Activated B cell treated with CpG ODN at 0.5 μM for 24 hours (primary cell): ENCODE measurements at regions of chr6 and their contacts with region 1.

Region 1: GRCh38 chr6:72669324-72669723 is 47.5 kb downstream of the KCNQ5 start:
- DNase-seq: no peak
- ATAC-seq: no peak
- H3K4me3 Mint-ChIP-seq: no peak overlapping the region
- H3K27ac Mint-ChIP-seq: no peak overlapping the region
- H3K4me1 Mint-ChIP-seq: peaks cover 7% of the 10 kb centered on the region
- H3K27me3 Mint-ChIP-seq: no peaks in the 10 kb centered on the region
- CTCF ChIP-seq: no peak

Region 2: DNA sequence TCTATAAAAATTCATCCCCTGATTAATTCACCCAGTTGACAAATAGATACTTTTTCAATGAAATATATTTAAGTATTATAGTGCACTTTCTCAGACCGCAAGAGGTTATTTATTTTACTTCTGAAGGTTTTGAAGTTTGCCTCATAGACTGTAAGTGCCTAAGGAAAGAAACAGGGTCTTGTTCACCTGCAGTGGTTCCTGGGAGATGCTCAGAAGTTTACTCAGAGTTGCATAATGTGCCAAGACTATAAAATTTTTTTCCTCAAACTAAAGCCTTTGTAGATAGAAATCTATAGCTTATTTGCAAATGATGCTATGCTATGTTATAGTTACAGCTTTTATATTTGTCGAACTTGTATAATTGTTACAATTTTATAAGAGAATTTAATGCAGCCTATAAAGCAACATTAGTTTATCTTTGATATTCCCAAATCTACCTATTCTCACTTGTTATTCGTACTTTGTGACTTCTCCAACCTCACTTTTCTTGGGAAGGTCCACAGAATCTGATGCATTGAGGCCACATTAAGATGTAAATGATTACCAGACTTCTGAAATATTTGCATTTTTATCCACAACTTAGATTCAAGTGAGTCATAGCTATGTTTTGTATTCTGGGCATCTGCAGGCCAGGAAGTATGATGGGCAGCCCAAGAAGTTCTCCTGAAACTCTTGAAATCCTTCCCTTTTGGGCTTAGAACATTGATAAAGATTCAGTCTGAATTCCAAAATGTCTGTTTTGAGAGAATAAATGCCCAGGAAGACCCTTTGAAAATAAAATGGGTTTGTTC is 11.7 kb before region 1 on chr6:
- CTCF ChIA-PET with region 1: no interaction called
- POLR2A ChIA-PET with region 1: no interaction called
- intact Hi-C with region 1: loop called (anchors 2 kb)
- DNase-seq: no peak
- ATAC-seq: no peak
- H3K4me3 Mint-ChIP-seq: no peak overlapping the region
- H3K27ac Mint-ChIP-seq: no peak overlapping the region
- H3K4me1 Mint-ChIP-seq: peaks cover 20% of the 10 kb centered on the region
- H3K27me3 Mint-ChIP-seq: no peaks in the 10 kb centered on the region
- CTCF ChIP-seq: no peak

Region 3: GRCh38 chr6:73006146-73006545 is 336.8 kb after region 1 on chr6:
- CTCF ChIA-PET with region 1: no interaction called
- POLR2A ChIA-PET with region 1: no interaction called
- intact Hi-C with region 1: no loop called
- DNase-seq: no peak
- ATAC-seq: no peak
- H3K4me3 Mint-ChIP-seq: no peak overlapping the region
- H3K27ac Mint-ChIP-seq: no peak overlapping the region
- H3K4me1 Mint-ChIP-seq: no peaks in the 10 kb centered on the region
- H3K27me3 Mint-ChIP-seq: no peaks in the 10 kb centered on the region
- CTCF ChIP-seq: no peak